ENCODE measurements at regions of chr4 and their contacts with region 1.

Region 1: GRCh38 chr4:15162465-15163283 is 160.4 kb downstream of the CPEB2 start:
- DNase-seq: no peak
- ATAC-seq: no peak
- H3K4me3 ChIP-seq: no peak overlapping the region
- H3K27ac ChIP-seq: no peak overlapping the region
- H3K4me1 ChIP-seq: no peaks in the 10 kb centered on the region
- H3K27me3 ChIP-seq: no peaks in the 10 kb centered on the region
- CTCF ChIP-seq: peak in 8 of 9 donors; percentile 6 to 63 (median 44)

Region 2: GRCh38 chr4:14749910-14750309 is 412.8 kb before region 1 on chr4:
- intact Hi-C with region 1: loop called in 1 of 10 experiments (anchors 10 kb)
- DNase-seq: peak; percentile 21 to 42
- ATAC-seq: peak; percentile 71 to 90 (median 84)
- H3K4me3 ChIP-seq: no peak overlapping the region
- H3K27ac ChIP-seq: no peak overlapping the region
- H3K4me1 ChIP-seq: peaks cover 0 to 5% (median 0%) of the 10 kb centered on the region in 9 donors
- H3K27me3 ChIP-seq: no peaks in the 10 kb centered on the region
- CTCF ChIP-seq: peak in 8 of 9 donors; percentile 19 to 69 (median 56)

Measured in heart right ventricle (tissue), 16 donors.